ENCODE measurements at regions of chr5 and their contacts with region 1.

Region 1: DNA sequence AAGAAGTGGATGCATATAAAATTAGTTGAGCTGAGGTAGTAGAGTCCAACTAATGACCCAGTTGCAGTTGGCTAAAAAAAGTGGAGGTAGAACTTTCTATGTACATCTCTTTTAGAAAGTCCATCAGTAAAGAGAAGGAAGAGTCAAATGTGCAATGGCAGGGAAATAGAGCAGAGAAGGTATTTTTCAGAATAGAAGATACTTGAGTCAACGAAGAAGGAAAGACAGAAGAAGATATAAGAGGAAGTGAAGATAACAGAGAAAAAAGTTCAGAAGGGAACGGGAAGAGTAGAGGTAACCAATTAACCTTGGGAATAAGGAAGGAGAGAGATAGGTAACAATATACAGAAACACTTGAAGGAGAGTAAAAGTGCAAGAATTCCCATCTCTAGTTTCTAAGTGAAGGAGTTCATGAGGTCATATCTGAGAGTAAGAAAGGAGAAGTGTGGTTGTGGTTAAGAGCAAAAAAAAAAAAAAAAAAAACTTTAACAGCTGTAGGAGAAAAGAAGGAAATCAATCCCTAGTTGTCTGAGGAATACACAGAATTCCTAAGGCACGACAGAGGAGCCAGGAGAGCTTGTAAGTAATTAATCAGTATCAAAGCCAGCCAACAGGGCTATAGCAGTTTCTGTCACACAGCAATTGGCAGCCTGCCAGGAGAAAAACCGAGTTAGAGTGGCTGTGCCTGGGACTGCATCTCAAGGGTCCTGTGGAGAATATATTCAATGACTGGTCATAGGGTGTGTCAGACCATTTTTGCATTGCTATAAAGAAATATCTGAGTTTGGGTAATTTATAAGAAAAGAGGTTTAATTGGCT is 61.0 kb downstream of the ARL15 start:
- ATAC-seq: peak; percentile 50 to 93 (median 78)
- H3K4me3 ChIP-seq: no peak overlapping the region
- H3K27ac ChIP-seq: no peak overlapping the region
- H3K4me1 ChIP-seq: no peaks in the 10 kb centered on the region

Region 2: DNA sequence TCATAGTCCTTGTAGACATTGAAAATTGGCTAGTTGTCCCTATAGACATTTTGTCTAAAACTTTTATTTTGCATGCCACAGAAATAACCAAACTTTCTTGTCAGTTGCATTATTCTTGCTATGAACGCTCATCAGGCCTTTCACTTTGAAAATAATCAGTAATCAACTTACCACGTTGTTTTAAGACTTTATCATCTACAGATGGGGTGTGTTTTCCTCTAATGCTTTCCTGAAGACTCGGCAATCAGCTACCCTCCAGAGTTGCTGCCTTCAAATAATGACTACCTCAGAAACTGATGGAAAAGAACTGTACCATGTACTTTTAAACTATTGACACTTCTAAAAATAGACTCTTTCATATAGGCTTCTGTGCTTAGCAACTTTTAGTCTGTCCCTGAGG is 172.6 kb after region 1 on chr5:
- in situ Hi-C with region 1: loop called in 1 of 9 experiments (anchors 10 kb)
- ATAC-seq: no peak
- H3K4me3 ChIP-seq: no peak overlapping the region
- H3K27ac ChIP-seq: no peak overlapping the region
- H3K4me1 ChIP-seq: no peaks in the 10 kb centered on the region

Region 3: GRCh38 chr5:54895816-54896341 is 646.5 kb after region 1 on chr5:
- in situ Hi-C with region 1: loop called in 2 of 9 experiments (anchors 25 kb)
- ATAC-seq: peak; percentile 68 to 92 (median 80)
- H3K4me3 ChIP-seq: no peak overlapping the region
- H3K27ac ChIP-seq: no peak overlapping the region
- H3K4me1 ChIP-seq: no peaks in the 10 kb centered on the region

Measured in motor neuron (in vitro differentiated cells).